Heart right ventricle (tissue), 16 donors: ENCODE measurements at regions of chr12 and their contacts with region 1.

Region 1: DNA sequence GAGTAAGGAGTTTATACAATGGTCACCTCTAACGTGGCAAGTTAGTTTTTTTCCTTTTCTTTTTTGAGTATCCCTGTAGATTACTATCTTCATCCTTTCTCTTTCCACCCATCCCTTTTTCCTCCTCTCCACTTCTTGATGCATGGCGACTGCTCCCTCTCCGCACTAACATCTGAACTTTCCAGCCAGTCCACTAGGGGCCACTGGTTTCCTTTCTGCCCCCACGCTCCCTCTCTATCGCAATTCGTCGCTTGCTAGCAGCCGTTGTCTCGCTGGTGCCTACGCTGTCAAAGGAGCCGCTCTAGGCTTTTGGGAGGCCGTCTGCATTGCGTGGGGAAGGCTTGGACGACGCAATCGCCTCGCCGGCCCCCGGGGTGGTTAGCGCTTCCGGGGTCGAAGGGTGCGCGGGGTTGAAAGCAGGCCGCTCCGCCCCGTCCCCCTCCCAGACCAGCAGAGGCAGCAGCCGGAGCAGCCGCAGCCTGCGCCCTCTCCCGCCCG is at the start of gene PCBP2:
- DNase-seq: peak; percentile 97 to 99
- ATAC-seq: peak; percentile 96 to 98 (median 98)
- H3K4me3 ChIP-seq: peak within 1 kb of the TSS; percentile 44 to 90 (median 68)
- H3K27ac ChIP-seq: peak within 1 kb of the TSS; percentile 72 to 98 (median 93)
- H3K4me1 ChIP-seq: peaks cover 3 to 40% (median 34%) of the 10 kb centered on the region in 9 donors
- H3K27me3 ChIP-seq: no peaks in the 10 kb centered on the region
- CTCF ChIP-seq: peak; percentile 68 to 97 (median 87)
- total RNA-seq, gene PCBP2: 492 to 579 (median 559) TPM

Region 2: DNA sequence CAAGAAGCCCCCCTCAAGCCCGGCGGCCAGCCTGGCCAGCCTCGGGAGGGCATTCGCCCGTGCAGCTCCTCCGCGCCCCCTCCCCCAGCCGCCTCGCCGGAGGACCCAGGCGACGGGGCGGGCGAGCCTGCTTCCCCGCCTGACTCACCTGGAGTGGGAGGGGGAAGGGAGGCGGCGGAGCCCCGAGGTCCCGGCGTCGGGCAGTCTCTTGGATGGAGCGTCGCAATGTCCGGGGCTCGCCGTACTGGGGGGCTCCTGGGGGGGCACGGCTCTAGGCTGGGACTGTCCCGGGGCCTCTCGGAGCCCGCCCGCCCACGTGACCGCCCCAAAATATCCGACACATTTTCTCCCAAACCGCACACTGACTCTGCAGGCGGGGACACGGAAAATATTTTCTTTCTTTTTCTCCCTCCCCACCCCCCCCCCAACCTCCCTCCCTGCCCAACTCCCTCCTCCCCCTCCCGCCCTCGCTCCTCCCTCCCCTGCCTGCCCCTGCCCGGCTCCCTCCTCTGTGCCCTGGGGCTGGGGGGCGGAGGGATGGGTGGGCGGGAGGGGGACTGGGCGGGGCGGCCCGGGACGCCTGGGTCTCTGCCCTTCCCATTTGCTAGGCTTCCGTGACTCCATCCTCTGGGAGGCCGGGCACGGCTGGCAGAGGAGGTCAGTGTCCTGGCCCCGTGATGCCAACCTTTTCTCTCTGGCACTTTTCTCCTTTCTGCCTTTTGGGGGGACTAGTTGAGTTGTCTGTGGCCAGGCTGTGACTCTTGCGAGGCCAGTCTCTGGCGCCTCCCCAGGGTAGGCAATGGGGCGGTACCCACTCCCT is 219.7 kb before region 1 on chr12 and contains the start of gene RARG:
- intact Hi-C with region 1: no loop called
- DNase-seq: peak in 1 of 2 donors; percentile 69
- ATAC-seq: peak; percentile 52 to 71 (median 65)
- H3K4me3 ChIP-seq: peak within 1 kb of the TSS; percentile 35 to 70 (median 64)
- H3K27ac ChIP-seq: peak within 1 kb of the TSS; percentile 21 to 79 (median 70)
- H3K4me1 ChIP-seq: peaks cover 6 to 40% (median 33%) of the 10 kb centered on the region in 9 donors
- H3K27me3 ChIP-seq: peaks cover 0 to 21% (median 0%) of the 10 kb centered on the region in 7 donors
- CTCF ChIP-seq: no peak
- total RNA-seq, gene RARG: 7.0 to 21.7 (median 13.9) TPM

Region 3: GRCh38 chr12:53441040-53441833 is 10.5 kb before region 1 on chr12 and contains the start of gene PRR13:
- intact Hi-C with region 1: loop called in 1 of 10 experiments (anchors 1 kb)
- DNase-seq: peak; percentile 98 to 100
- ATAC-seq: peak; percentile 98 to 100 (median 99)
- H3K4me3 ChIP-seq: peak within 1 kb of the TSS; percentile 48 to 91 (median 74)
- H3K27ac ChIP-seq: peak within 1 kb of the TSS; percentile 42 to 94 (median 88)
- H3K4me1 ChIP-seq: peaks cover 7 to 45% (median 18%) of the 10 kb centered on the region in 9 donors
- H3K27me3 ChIP-seq: no peaks in the 10 kb centered on the region
- CTCF ChIP-seq: peak in 1 of 9 donors; percentile 3
- total RNA-seq, gene PRR13: 28.6 to 70.0 (median 55.4) TPM

Region 4: DNA sequence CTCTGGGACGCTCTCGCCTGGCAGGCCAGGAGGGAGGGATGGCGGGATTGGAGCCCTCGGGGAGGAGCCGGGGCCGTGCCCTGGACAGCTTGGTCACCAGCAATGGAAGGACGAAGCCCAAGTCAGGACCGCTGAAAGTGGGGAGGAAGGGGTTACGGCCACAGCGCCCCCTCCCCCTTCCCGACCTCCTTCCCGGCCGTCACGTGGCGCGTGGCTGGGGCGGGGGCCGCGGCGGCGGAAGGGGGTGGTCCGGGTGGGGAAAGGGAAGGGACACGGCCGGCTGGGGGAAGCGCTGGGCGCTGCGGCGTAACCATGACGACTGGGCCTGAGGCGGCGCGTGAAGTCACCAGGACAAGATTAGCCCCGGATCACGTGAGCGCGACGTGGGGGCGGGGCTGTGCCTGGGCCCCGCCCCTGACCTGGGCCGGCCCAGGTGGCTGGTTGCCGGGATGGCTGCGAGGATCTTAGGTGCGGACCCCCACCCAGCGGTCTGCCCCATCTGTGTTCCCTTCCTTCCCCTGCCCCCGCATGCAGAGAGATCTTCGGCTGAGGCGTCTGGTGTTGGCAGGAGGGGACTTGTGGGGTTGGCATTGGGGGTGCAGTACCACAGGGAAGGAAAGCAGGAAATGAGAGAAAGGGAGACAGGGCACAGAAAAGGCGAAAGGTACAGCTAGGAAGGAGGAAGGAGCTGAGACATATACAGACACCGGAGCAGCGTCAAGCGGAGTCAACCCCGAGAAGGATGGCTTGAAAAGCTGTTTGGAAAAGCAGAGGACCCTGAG is 41.3 kb after region 1 on chr12:
- intact Hi-C with region 1: loop called in 3 of 10 experiments (anchors 5 kb)
- DNase-seq: peak; percentile 89 to 92
- ATAC-seq: peak; percentile 92 to 95 (median 94)
- H3K4me3 ChIP-seq: peak overlapping the region; percentile 4 to 66 (median 60)
- H3K27ac ChIP-seq: peak overlapping the region in 9 of 10 donors; percentile 53 to 92 (median 86)
- H3K4me1 ChIP-seq: peaks cover 0 to 48% (median 26%) of the 10 kb centered on the region in 9 donors
- H3K27me3 ChIP-seq: no peaks in the 10 kb centered on the region
- CTCF ChIP-seq: peak in 3 of 9 donors; percentile 30 to 40 (median 30)

Region 5: DNA sequence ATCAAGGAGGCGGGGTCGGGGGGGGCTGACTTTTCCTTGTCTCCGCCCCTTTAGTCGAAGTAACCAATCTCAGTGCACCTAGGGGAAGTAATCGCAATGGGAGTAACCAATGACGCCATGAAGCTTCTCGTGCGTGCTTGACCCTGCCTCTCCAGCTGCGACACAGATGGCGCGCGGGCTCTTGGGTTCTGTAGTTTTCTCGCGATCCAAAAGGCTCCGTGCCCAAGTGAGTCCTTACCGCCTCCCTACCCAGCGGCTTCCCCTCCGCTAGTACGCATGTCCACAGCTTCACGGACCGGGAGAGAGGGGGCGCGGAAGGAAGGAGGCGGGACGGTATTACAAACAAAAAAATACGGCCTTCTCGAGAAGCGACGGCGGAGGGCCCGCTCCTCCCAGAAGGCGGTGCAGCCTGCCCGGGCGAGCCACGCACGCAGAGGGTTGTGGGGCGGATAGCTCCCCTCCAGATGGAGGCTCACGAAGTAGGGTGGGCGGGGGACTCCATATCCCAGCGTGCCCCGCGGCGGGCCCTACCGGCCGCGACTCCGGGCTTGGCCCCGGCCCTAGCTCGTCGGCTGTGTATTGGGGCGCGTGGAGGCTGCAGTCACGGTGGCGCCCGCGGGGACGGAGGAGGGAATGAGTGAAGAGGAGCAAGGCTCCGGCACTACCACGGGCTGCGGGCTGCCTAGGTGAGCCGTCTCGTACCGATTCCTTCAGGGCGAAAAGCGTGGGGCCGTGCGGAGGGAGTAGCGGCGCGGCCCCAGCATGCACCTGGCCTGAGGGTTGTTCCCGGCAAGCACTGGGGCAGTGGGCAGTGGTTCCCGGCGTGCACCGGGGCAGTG is 49.3 kb after region 1 on chr12 and contains the start of gene TARBP2:
- intact Hi-C with region 1: loop called in 7 of 10 experiments (anchors 2 to 10 kb)
- DNase-seq: peak; percentile 96 to 99
- ATAC-seq: peak; percentile 87 to 93 (median 89)
- H3K4me3 ChIP-seq: peak within 1 kb of the TSS; percentile 44 to 87 (median 74)
- H3K27ac ChIP-seq: peak within 1 kb of the TSS; percentile 96 to 99 (median 97)
- H3K4me1 ChIP-seq: peaks cover 15 to 55% (median 33%) of the 10 kb centered on the region in 9 donors
- H3K27me3 ChIP-seq: no peaks in the 10 kb centered on the region
- CTCF ChIP-seq: peak in 3 of 9 donors; percentile 17 to 26 (median 21)
- total RNA-seq, gene TARBP2: 7.0 to 13.7 (median 11.0) TPM

Region 6: GRCh38 chr12:53508534-53509199 is 57.0 kb after region 1 on chr12:
- intact Hi-C with region 1: loop called in 4 of 10 experiments (anchors 5 to 10 kb)
- DNase-seq: peak; percentile 86 to 88
- ATAC-seq: peak; percentile 77 to 91 (median 89)
- H3K4me3 ChIP-seq: no peak overlapping the region
- H3K27ac ChIP-seq: peak overlapping the region in 9 of 10 donors; percentile 17 to 74 (median 44)
- H3K4me1 ChIP-seq: peaks cover 0 to 14% (median 10%) of the 10 kb centered on the region in 9 donors
- H3K27me3 ChIP-seq: no peaks in the 10 kb centered on the region
- CTCF ChIP-seq: peak; percentile 86 to 96 (median 93)